CD8-positive, alpha-beta T cell (primary cell): ENCODE measurements at regions of chr11 and their contacts with region 1.

Region 1: DNA sequence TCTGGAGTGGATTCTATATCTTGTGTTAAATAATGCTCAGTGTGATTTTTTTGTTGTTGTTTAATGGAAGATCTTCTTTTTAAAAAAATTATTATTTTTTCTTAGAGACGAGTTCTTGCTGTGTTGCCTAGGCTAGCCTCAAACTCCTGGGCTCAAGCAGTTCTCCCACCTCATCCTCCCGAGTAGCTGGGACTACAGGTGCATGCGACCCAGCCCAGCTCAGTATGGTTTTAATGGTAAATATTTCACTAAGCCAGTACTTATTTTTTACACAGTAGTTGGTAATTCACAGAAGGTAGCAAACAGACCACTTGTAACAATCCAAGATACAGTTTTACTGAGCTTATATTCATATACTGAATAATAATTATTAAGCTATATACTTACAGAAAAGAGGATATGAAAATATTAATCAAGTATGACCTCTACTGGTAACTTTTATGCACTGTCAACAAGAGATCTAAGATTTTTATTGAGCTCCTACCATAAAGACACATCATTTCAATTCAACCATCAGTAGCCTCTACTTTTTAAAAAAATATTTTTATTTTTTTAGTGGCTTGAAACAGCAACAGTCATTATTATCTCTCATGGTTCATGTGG is 6.1 kb upstream of the CD59 start:
- DNase-seq: peak in 2 of 9 experiments; percentile 39 to 55
- ATAC-seq: peak; percentile 44
- H3K4me3 ChIP-seq: no peak overlapping the region
- H3K4me3 Mint-ChIP-seq: no peak overlapping the region
- H3K27ac ChIP-seq: no peak overlapping the region
- H3K27ac Mint-ChIP-seq: no peak overlapping the region
- H3K4me1 ChIP-seq: no peaks in the 10 kb centered on the region
- H3K4me1 Mint-ChIP-seq: no peaks in the 10 kb centered on the region
- H3K27me3 ChIP-seq: no peaks in the 10 kb centered on the region
- H3K27me3 Mint-ChIP-seq: no peaks in the 10 kb centered on the region
- CTCF ChIP-seq: peak; percentile 63

Region 2: DNA sequence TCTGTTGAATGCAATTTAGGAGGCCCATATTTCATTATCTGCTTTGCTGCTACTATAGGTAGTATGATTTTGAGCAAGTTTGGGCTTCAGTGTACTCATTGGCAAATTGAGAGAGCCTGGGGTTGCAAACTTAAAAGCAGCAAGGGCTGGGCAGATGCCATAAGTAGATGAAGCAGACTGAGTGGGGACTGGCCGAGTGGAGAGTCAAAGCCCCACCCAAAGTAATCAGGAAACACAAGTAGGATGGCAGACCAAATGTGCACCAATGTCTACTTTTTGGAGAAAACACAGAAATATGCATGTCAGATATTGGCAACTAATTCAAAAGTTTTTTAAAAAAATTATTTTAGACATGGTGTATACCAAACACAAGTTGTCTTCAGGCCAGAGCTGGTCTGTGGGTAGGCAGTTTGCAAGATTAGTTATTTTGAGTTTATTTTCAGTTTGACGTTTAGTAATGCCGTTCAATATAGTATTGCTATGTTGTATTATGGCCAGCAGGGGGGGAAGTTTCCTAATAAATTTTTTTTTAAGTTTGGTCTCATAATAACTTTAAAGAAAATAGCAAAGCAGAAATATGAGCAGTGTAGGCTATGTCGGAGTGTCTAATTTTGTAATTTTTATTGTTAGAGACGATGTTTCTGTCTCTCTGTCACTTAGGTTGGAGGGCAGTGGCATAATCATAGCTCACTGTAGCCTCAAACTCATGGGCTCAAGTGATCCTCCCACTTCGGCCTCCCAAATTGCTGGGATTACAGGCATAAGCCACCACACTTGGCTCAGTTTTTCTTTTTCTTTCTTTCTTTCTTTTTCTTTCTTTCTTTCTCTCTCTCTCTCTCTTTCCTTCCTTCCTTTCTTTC is 380.1 kb before region 1 on chr11:
- CTCF ChIA-PET with region 1: interaction called, 18 read pairs
- POLR2A ChIA-PET with region 1: no interaction called
- intact Hi-C with region 1: loop called in 1 of 2 experiments (anchors 1 kb)
- DNase-seq: peak in 3 of 9 experiments; percentile 16 to 65 (median 56)
- ATAC-seq: peak; percentile 54
- H3K4me3 ChIP-seq: no peak overlapping the region
- H3K4me3 Mint-ChIP-seq: no peak overlapping the region
- H3K27ac ChIP-seq: no peak overlapping the region
- H3K27ac Mint-ChIP-seq: no peak overlapping the region
- H3K4me1 ChIP-seq: no peaks in the 10 kb centered on the region
- H3K4me1 Mint-ChIP-seq: peaks cover 2% of the 10 kb centered on the region
- H3K27me3 ChIP-seq: no peaks in the 10 kb centered on the region
- H3K27me3 Mint-ChIP-seq: peaks cover 10% of the 10 kb centered on the region
- CTCF ChIP-seq: peak; percentile 76

Region 3: DNA sequence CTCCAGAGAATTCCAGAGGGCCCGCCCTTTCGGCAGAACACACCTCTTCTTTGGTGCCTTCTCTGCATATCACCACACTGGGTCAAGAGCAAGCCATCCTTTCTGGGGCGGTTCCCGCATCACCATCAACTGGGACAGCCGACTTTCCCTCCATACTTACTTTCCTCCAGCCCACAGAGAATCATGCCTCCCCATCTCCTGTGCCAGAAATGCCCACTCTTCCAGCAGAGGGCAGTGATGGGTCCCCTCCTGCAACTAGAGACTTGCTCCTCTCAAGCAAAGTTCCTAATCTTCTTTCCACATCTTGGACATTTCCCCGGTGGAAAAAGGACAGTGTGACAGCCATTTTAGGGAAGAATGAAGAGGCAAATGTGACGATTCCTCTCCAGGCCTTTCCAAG is 199.4 kb before region 1 on chr11:
- CTCF ChIA-PET with region 1: interaction called, 7 read pairs
- POLR2A ChIA-PET with region 1: no interaction called
- intact Hi-C with region 1: loop called in 1 of 2 experiments (anchors 2 kb)
- DNase-seq: peak in 6 of 9 experiments; percentile 20 to 53 (median 29)
- ATAC-seq: no peak
- H3K4me3 ChIP-seq: no peak overlapping the region
- H3K4me3 Mint-ChIP-seq: no peak overlapping the region
- H3K27ac ChIP-seq: no peak overlapping the region
- H3K27ac Mint-ChIP-seq: no peak overlapping the region
- H3K4me1 ChIP-seq: no peaks in the 10 kb centered on the region
- H3K4me1 Mint-ChIP-seq: no peaks in the 10 kb centered on the region
- H3K27me3 ChIP-seq: no peaks in the 10 kb centered on the region
- H3K27me3 Mint-ChIP-seq: peaks cover 24% of the 10 kb centered on the region
- CTCF ChIP-seq: no peak

Region 4: GRCh38 chr11:33716236-33716635 is 26.1 kb before region 1 on chr11:
- CTCF ChIA-PET with region 1: interaction called, 31 read pairs
- POLR2A ChIA-PET with region 1: interaction called, 3 read pairs
- intact Hi-C with region 1: loop called in 1 of 2 experiments (anchors 1 kb)
- DNase-seq: peak in 2 of 9 experiments; percentile 34 to 44
- ATAC-seq: no peak
- H3K4me3 ChIP-seq: no peak overlapping the region
- H3K4me3 Mint-ChIP-seq: no peak overlapping the region
- H3K27ac ChIP-seq: no peak overlapping the region
- H3K27ac Mint-ChIP-seq: no peak overlapping the region
- H3K4me1 ChIP-seq: no peaks in the 10 kb centered on the region
- H3K4me1 Mint-ChIP-seq: no peaks in the 10 kb centered on the region
- H3K27me3 ChIP-seq: no peaks in the 10 kb centered on the region
- H3K27me3 Mint-ChIP-seq: no peaks in the 10 kb centered on the region
- CTCF ChIP-seq: no peak

Region 5: GRCh38 chr11:33753304-33753967 is 11.1 kb after region 1 on chr11:
- CTCF ChIA-PET with region 1: interaction called, 12 read pairs
- POLR2A ChIA-PET with region 1: interaction called, 3 read pairs
- intact Hi-C with region 1: no loop called
- DNase-seq: no peak
- ATAC-seq: no peak
- H3K4me3 ChIP-seq: no peak overlapping the region
- H3K4me3 Mint-ChIP-seq: no peak overlapping the region
- H3K27ac ChIP-seq: no peak overlapping the region
- H3K27ac Mint-ChIP-seq: no peak overlapping the region
- H3K4me1 ChIP-seq: no peaks in the 10 kb centered on the region
- H3K4me1 Mint-ChIP-seq: no peaks in the 10 kb centered on the region
- H3K27me3 ChIP-seq: no peaks in the 10 kb centered on the region
- H3K27me3 Mint-ChIP-seq: no peaks in the 10 kb centered on the region
- CTCF ChIP-seq: no peak

Region 6: GRCh38 chr11:34223021-34223813 is 480.9 kb after region 1 on chr11:
- CTCF ChIA-PET with region 1: no interaction called
- POLR2A ChIA-PET with region 1: no interaction called
- intact Hi-C with region 1: no loop called
- DNase-seq: no peak
- ATAC-seq: no peak
- H3K4me3 ChIP-seq: no peak overlapping the region
- H3K4me3 Mint-ChIP-seq: no peak overlapping the region
- H3K27ac ChIP-seq: no peak overlapping the region
- H3K27ac Mint-ChIP-seq: no peak overlapping the region
- H3K4me1 ChIP-seq: no peaks in the 10 kb centered on the region
- H3K4me1 Mint-ChIP-seq: no peaks in the 10 kb centered on the region
- H3K27me3 ChIP-seq: no peaks in the 10 kb centered on the region
- H3K27me3 Mint-ChIP-seq: no peaks in the 10 kb centered on the region
- CTCF ChIP-seq: no peak